Activated CD4-positive, alpha-beta T cell treated with anti-CD3 and anti-CD28 coated beads for 36 hours (primary cell): ENCODE measurements at regions of chr9 and their contacts with region 1.

Region 1: GRCh38 chr9:130042833-130043653 is at the start of gene FNBP1:
- DNase-seq: peak; percentile 91
- ATAC-seq: peak; percentile 63
- H3K4me3 Mint-ChIP-seq: peak within 1 kb of the TSS; percentile 100
- H3K27ac Mint-ChIP-seq: peak within 1 kb of the TSS; percentile 100
- H3K4me1 Mint-ChIP-seq: peaks cover 33% of the 10 kb centered on the region
- H3K27me3 Mint-ChIP-seq: no peaks in the 10 kb centered on the region
- total RNA-seq, gene FNBP1: 254 to 354 TPM

Region 2: DNA sequence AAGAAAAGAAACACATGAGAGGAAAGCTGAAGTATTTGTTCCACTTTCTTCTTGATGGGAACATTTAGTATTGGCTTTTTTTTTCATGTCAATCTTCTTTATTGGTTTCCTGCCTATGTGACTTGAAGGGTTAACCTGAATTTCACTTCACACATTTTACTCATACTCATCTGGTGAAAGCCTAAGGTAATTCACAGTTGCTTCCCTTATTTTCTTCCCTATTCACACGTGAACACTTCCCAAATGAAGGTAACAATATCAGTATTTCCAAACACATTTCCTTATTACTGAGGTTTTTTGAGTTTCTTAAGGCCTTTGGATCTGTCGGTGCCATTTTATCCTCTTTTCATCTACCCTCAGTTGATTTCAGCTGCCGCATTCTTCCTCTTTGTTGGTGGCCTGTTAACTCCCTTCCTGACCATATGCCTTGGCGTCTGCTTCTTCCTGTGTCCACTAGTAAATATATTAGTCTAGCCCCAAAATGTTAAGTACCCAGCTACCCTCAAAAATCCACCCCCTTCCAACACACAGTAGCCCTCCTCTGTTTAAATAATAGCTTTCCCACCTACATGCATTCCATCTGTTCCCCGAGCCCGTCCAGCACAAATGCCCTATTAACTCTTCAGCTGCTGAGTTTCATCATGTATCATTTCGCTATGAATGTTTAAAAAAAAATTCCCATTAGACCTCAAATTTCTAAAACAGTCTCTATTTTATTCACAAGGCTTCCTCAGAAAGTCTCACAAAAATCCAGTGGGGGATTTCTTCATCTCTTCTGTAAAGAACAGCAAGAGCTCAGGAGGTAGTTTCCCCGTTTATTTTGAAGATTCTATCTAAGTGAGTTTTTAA is 110.5 kb before region 1 on chr9:
- CTCF ChIA-PET with region 1: interaction called, 7 read pairs
- POLR2A ChIA-PET with region 1: interaction called, 4 read pairs
- intact Hi-C with region 1: loop called in 1 of 2 experiments (anchors 2 kb)
- DNase-seq: no peak
- ATAC-seq: peak; percentile 31
- H3K4me3 Mint-ChIP-seq: peak overlapping the region; percentile 59
- H3K27ac Mint-ChIP-seq: peak overlapping the region; percentile 92
- H3K4me1 Mint-ChIP-seq: peaks cover 69% of the 10 kb centered on the region
- H3K27me3 Mint-ChIP-seq: no peaks in the 10 kb centered on the region

Region 3: DNA sequence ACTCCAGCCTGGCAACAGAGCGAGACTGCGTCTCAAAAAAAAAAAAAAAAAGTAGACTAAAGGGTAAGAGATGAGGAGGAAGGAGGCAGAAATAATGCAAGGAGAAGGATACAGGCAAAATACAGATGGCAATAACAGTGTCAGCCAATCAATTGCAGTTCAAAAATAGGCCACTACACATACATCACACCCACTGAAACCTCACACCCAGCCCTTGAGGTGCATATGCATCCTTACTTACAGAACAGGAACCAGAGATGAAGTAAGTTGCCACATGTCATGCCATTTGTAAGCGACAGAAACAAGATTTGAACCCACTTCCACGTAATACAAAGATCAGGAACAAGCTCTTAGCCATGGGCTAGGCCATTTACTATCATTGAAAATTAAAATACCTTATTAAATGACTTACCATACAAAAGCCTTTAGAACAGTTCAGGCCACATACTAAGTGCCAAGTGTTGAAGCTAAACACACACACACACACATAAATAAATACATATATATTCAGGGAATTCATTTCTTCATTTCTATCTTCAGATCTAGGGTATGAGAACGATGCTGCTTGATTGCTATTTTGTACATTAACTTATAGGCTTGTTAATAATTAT is 98.4 kb before region 1 on chr9:
- CTCF ChIA-PET with region 1: interaction called, 3 read pairs
- POLR2A ChIA-PET with region 1: no interaction called
- intact Hi-C with region 1: loop called in 1 of 2 experiments (anchors 5 kb)
- DNase-seq: peak; percentile 77
- ATAC-seq: peak; percentile 94
- H3K4me3 Mint-ChIP-seq: peak overlapping the region; percentile 5
- H3K27ac Mint-ChIP-seq: peak overlapping the region; percentile 86
- H3K4me1 Mint-ChIP-seq: peaks cover 64% of the 10 kb centered on the region
- H3K27me3 Mint-ChIP-seq: no peaks in the 10 kb centered on the region

Region 4: GRCh38 chr9:129962889-129963703 is 79.9 kb before region 1 on chr9:
- CTCF ChIA-PET with region 1: interaction called, 5 read pairs
- POLR2A ChIA-PET with region 1: interaction called, 5 read pairs
- intact Hi-C with region 1: loop called (anchors 2 kb)
- DNase-seq: peak; percentile 86
- ATAC-seq: peak; percentile 94
- H3K4me3 Mint-ChIP-seq: peak overlapping the region; percentile 76
- H3K27ac Mint-ChIP-seq: peak overlapping the region; percentile 96
- H3K4me1 Mint-ChIP-seq: peaks cover 87% of the 10 kb centered on the region
- H3K27me3 Mint-ChIP-seq: no peaks in the 10 kb centered on the region

Region 5: GRCh38 chr9:129995409-129996160 is 47.5 kb before region 1 on chr9:
- CTCF ChIA-PET with region 1: interaction called, 11 read pairs
- POLR2A ChIA-PET with region 1: interaction called, 6 read pairs
- intact Hi-C with region 1: loop called in 1 of 2 experiments (anchors 1 kb)
- DNase-seq: peak; percentile 69
- ATAC-seq: peak; percentile 43
- H3K4me3 Mint-ChIP-seq: peak overlapping the region; percentile 59
- H3K27ac Mint-ChIP-seq: peak overlapping the region; percentile 96
- H3K4me1 Mint-ChIP-seq: peaks cover 88% of the 10 kb centered on the region
- H3K27me3 Mint-ChIP-seq: no peaks in the 10 kb centered on the region

Region 6: GRCh38 chr9:130029223-130029973 is 13.6 kb before region 1 on chr9:
- CTCF ChIA-PET with region 1: interaction called, 4 read pairs
- POLR2A ChIA-PET with region 1: interaction called, 8 read pairs
- intact Hi-C with region 1: loop called in 1 of 2 experiments (anchors 1 kb)
- DNase-seq: peak; percentile 70
- ATAC-seq: peak; percentile 45
- H3K4me3 Mint-ChIP-seq: peak overlapping the region; percentile 44
- H3K27ac Mint-ChIP-seq: peak overlapping the region; percentile 92
- H3K4me1 Mint-ChIP-seq: peaks cover 98% of the 10 kb centered on the region
- H3K27me3 Mint-ChIP-seq: no peaks in the 10 kb centered on the region

Region 7: GRCh38 chr9:130053504-130054324 is 10.7 kb after region 1 on chr9 and contains the start of gene GPR107:
- CTCF ChIA-PET with region 1: interaction called, 12 read pairs
- POLR2A ChIA-PET with region 1: interaction called, 3 read pairs
- intact Hi-C with region 1: loop called in 1 of 2 experiments (anchors 1 kb)
- DNase-seq: peak; percentile 91
- ATAC-seq: peak; percentile 90
- H3K4me3 Mint-ChIP-seq: peak within 1 kb of the TSS; percentile 94
- H3K27ac Mint-ChIP-seq: peak within 1 kb of the TSS; percentile 86
- H3K4me1 Mint-ChIP-seq: peaks cover 30% of the 10 kb centered on the region
- H3K27me3 Mint-ChIP-seq: no peaks in the 10 kb centered on the region
- total RNA-seq, gene GPR107: 17.7 to 19.7 TPM